ENCODE measurements at regions of chr6 and their contacts with region 1.

Region 1: DNA sequence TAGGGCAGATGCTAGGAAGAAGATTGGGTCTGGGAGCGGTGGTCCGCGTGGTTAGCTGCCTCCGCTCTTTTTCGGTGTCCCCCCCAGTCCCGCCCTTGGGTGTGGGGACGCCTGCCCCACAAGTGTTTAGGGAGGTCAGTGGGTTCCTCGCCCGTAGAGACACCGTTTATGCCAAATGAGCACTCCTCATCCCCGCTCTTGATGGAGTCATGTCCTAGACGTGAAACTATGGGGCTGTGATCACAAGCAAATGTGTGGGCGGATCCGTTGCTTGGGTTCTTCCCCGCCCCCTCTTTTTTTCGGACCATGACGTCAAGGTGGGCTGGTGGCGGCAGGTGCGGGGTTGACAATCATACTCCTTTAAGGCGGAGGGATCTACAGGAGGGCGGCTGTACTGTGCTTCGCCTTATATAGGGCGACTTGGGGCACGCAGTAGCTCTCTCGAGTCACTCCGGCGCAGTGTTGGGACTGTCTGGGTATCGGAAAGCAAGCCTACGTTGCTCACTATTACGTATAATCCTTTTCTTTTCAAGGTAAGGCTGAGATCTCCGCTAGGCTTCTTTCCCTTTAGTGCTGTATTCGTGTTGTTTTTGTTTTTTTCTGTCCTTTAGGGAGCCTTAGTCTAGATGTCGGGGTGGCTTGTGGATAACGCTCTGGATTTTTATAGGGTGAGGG is at the start of gene HSP90AB1:
- DNase-seq: peak; percentile 98
- ATAC-seq: peak; percentile 65
- H3K4me3 ChIP-seq: peak within 1 kb of the TSS; percentile 81 to 97 (median 87)
- H3K27ac ChIP-seq: peak within 1 kb of the TSS; percentile 96
- H3K4me1 ChIP-seq: peaks cover 72% of the 10 kb centered on the region
- H3K27me3 ChIP-seq: no peaks in the 10 kb centered on the region; a peak in 1 of 5 replicates
- CTCF ChIP-seq: no peak
- EP300 ChIP-seq: peak; percentile 37 to 65; a peak in 3 of 4 replicates
- POLR2A ChIP-seq: peak in 1 of 2 experiments; percentile 100; a peak in 2 of 4 replicates
- RAD21 ChIP-seq: peak; percentile 22; the same call in 1 of the 2 replicates
- total RNA-seq, gene HSP90AB1: 1,472 and 2,212 TPM in 2 replicates

Region 2: GRCh38 chr6:44096612-44097011 is 150.2 kb before region 1 on chr6:
- CTCF ChIA-PET with region 1: no interaction called
- POLR2A ChIA-PET with region 1: interaction called, 18 read pairs
- in situ Hi-C with region 1: no loop called
- intact Hi-C with region 1: loop called (anchors 5 kb)
- DNase-seq: peak; percentile 77
- ATAC-seq: peak; percentile 56
- H3K4me3 ChIP-seq: no peak overlapping the region
- H3K27ac ChIP-seq: no peak overlapping the region
- H3K4me1 ChIP-seq: peaks cover 95% of the 10 kb centered on the region
- H3K27me3 ChIP-seq: no peaks in the 10 kb centered on the region
- CTCF ChIP-seq: peak; percentile 99
- EP300 ChIP-seq: no peak
- POLR2A ChIP-seq: 0 out of 4 replicates have a peak, but pooled peaks of 1 of the 2 experiments have one; percentile 35
- RAD21 ChIP-seq: peak; percentile 97

Region 3: DNA sequence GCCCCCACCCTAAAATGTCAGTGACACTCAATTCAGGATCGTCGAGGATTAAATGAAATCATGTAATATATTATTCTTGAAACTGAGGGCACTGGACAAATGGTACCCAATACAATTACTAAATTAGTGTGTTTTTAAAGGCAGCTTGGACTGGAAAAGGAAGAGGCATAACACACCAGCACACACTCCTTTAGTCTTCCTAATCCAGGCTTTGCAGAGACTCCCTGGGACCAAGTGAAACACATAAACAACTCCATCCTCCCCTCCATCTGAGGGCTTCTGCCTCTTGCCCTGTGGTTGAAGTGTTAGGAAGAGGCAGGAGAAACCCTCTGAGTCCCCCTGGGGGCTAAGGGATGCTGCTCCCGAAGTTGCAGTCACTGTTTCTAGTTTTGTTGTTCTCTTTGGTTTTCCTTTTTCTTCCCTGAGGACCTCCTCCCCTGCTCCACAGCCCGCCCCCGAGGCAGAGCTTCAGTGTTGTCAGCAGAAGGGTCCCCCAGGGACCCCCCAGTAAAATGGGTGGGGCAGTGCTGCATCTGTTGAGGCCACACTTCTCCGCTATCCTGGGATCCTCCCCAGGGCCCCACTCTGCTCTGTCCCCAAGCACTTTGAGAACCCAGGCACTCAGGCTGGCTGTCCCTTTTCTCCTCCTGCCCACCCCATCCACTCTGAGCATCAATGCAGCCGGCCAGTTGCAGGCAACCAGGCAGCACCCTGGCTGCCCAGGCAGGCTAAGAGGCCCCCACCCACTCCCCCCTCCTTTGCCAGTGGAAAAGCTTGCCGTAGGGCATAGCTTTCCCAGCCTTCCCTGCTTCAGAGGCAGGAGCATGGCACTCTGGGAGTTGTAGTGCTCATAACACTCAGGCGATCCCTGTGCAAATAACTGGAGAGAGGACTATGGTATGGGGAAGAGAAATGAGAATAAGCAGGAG is 113.5 kb before region 1 on chr6:
- CTCF ChIA-PET with region 1: no interaction called
- POLR2A ChIA-PET with region 1: interaction called, 14 read pairs
- in situ Hi-C with region 1: no loop called
- intact Hi-C with region 1: no loop called
- DNase-seq: peak; percentile 68
- ATAC-seq: peak; percentile 92
- H3K4me3 ChIP-seq: no peak overlapping the region
- H3K27ac ChIP-seq: peak overlapping the region; percentile 4
- H3K4me1 ChIP-seq: peaks cover 57% of the 10 kb centered on the region
- H3K27me3 ChIP-seq: no peaks in the 10 kb centered on the region
- CTCF ChIP-seq: no peak
- EP300 ChIP-seq: no peak
- POLR2A ChIP-seq: no peak
- RAD21 ChIP-seq: no peak

Region 4: DNA sequence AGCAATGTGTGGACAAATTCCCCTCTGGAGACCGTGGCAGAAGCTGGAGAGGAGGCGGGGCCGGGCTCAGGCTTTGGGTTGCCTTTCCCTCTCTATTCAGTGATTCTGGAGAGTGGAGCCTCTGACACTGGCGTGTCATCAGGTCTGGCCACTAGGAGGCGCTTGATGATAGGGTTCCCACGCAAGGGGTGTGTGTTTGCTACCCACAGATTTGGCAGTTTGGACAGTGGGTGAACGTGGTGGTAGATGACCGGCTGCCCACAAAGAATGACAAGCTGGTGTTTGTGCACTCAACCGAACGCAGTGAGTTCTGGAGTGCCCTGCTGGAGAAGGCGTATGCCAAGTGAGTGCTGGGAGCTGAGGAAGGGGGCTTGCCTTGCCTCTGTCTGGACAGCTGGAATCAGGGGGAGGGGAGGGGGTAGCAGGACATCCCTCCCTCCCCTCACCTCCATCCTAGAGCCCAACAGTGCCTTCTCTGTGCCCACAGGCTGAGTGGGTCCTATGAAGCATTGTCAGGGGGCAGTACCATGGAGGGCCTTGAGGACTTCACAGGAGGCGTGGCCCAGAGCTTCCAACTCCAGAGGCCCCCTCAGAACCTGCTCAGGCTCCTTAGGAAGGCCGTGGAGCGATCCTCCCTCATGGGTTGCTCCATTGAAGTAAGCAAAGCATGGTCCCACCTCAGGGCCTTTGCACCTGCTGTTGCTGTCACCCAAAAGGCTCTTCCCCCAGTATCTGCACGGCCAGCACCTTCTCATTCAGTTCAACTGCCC is 73.9 kb before region 1 on chr6:
- CTCF ChIA-PET with region 1: no interaction called
- POLR2A ChIA-PET with region 1: interaction called, 13 read pairs
- in situ Hi-C with region 1: no loop called
- intact Hi-C with region 1: no loop called
- DNase-seq: peak; percentile 67
- ATAC-seq: peak; percentile 82
- H3K4me3 ChIP-seq: peak overlapping the region in 1 of 3 experiments; percentile 13; a peak in 1 of 6 replicates
- H3K27ac ChIP-seq: no peak overlapping the region
- H3K4me1 ChIP-seq: peaks cover 58% of the 10 kb centered on the region
- H3K27me3 ChIP-seq: peaks cover 5 to 30% of the 10 kb centered on the region in 2 experiments; a peak in 3 of 5 replicates
- CTCF ChIP-seq: peak; percentile 99
- EP300 ChIP-seq: no peak
- POLR2A ChIP-seq: no peak
- RAD21 ChIP-seq: peak; percentile 95

Region 5: DNA sequence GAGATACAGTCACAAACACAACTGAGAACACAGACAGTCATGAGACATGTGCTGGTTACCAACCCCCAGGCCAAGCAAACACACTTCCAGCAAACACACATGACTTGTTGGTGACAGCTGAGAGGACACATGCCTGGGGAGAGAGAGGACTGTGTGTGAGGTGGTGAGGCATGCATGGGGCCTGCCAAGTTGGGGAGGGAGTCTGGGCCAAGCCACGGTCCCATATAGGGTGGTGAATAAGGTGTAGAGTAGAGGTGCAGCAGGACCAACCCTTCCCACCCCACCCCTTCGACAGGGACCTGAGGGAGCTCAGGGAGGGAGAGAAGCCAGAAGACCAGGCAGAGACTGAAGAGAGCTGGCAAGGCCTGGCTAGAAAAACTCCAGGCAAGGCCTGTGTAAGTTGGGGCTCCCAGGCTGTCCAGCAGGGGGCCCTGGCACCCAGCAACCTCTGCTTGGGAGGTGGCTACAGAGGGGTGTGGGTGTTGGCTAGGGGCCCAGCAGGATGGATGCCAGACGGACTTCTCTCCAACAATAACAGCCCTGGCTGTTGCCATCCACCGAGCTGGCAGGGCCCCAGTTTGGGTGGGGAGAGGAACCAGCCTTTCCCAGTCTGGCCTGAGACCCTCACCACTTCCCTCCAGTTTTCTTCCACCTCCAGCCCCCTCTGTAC is 25.4 kb before region 1 on chr6:
- CTCF ChIA-PET with region 1: no interaction called
- POLR2A ChIA-PET with region 1: interaction called, 61 read pairs
- in situ Hi-C with region 1: no loop called
- intact Hi-C with region 1: no loop called
- DNase-seq: peak; percentile 85
- ATAC-seq: peak; percentile 70
- H3K4me3 ChIP-seq: peak overlapping the region in 1 of 3 experiments; percentile 36; a peak in 1 of 6 replicates
- H3K27ac ChIP-seq: no peak overlapping the region
- H3K4me1 ChIP-seq: peaks cover 87% of the 10 kb centered on the region
- H3K27me3 ChIP-seq: peaks cover 1 to 9% of the 10 kb centered on the region in 2 experiments; a peak in 3 of 5 replicates
- CTCF ChIP-seq: peak; percentile 91
- EP300 ChIP-seq: peak in 1 of 2 experiments; percentile 12; a peak in 1 of 4 replicates
- POLR2A ChIP-seq: no peak
- RAD21 ChIP-seq: peak; percentile 86

Region 6: DNA sequence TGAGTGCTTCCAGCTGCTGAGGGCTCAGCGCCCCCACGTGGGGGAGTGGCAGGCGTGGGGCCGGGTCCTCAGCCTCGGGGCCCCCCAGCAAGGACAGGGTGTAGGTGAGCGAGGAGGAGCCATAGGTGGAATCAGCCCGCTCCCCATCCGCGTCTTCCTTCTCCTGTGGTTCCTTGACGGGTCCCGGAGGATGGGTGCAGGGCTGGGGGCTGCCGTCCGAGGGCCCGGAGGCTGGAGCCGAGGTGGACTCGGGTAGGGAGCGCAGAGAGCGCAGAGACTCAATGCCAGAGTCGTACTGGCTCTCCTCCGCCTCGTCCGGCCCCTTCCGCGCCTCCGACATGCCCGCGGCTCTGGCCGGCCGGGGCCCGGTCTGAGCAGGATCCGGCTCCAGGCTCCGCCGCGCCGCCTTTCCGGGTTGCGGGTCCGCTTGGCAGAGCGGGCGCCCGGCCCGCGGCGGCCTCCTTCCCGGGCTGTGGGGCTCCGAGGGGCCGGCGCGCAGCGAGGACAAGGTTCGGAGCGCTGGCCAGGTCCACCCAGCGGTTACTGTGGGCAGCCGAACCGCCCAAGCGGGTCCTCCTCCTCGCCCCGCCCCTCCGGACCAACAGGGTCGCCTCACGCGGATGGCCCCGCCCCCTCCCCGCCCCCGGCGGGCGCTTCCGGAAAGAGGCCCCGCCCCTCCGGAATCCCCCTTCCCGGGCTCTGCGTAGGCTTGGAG is 18.4 kb after region 1 on chr6 and contains the start of gene NFKBIE:
- CTCF ChIA-PET with region 1: no interaction called
- POLR2A ChIA-PET with region 1: interaction called, 10 read pairs
- in situ Hi-C with region 1: no loop called
- intact Hi-C with region 1: no loop called
- DNase-seq: peak; percentile 85
- ATAC-seq: peak; percentile 86
- H3K4me3 ChIP-seq: peak within 1 kb of the TSS; percentile 64 to 95 (median 76)
- H3K27ac ChIP-seq: peak within 1 kb of the TSS; percentile 67
- H3K4me1 ChIP-seq: peaks cover 40% of the 10 kb centered on the region
- H3K27me3 ChIP-seq: peaks cover 5 to 20% of the 10 kb centered on the region in 2 experiments; a peak in 4 of 5 replicates
- CTCF ChIP-seq: peak; percentile 94
- EP300 ChIP-seq: no peak
- POLR2A ChIP-seq: peak in 1 of 2 experiments; percentile 82; a peak in 2 of 4 replicates
- RAD21 ChIP-seq: no peak; the same call in 1 of the 2 replicates
- total RNA-seq, gene NFKBIE: 14.5 and 15.0 TPM in 2 replicates